Transverse colon (tissue), 4 donors: ENCODE measurements at regions of chr18 and their contacts with region 1.

Region 1: GRCh38 chr18:6807515-6808257 is 78.2 kb downstream of the ARHGAP28 start:
- DNase-seq: no peak
- H3K4me3 ChIP-seq: no peak overlapping the region
- H3K27ac ChIP-seq: no peak overlapping the region
- H3K4me1 ChIP-seq: no peaks in the 10 kb centered on the region
- H3K27me3 ChIP-seq: no peaks in the 10 kb centered on the region
- CTCF ChIP-seq: no peak
- EP300 ChIP-seq: no peak
- POLR2A ChIP-seq: no peak

Region 2: GRCh38 chr18:6714010-6714409 is 93.7 kb before region 1 on chr18:
- in situ Hi-C with region 1: loop called in 1 of 4 experiments (anchors 25 kb)
- intact Hi-C with region 1: no loop called
- DNase-seq: no peak
- H3K4me3 ChIP-seq: no peak overlapping the region
- H3K27ac ChIP-seq: no peak overlapping the region
- H3K4me1 ChIP-seq: no peaks in the 10 kb centered on the region
- H3K27me3 ChIP-seq: no peaks in the 10 kb centered on the region
- CTCF ChIP-seq: no peak
- EP300 ChIP-seq: no peak
- POLR2A ChIP-seq: no peak

Region 3: GRCh38 chr18:6731222-6731596 is 76.5 kb before region 1 on chr18:
- in situ Hi-C with region 1: no loop called
- intact Hi-C with region 1: no loop called
- DNase-seq: no peak
- H3K4me3 ChIP-seq: peak overlapping the region in 1 of 4 donors; percentile 59
- H3K27ac ChIP-seq: peak overlapping the region; percentile 71 to 87 (median 80)
- H3K4me1 ChIP-seq: peaks cover 0 to 4% (median 2%) of the 10 kb centered on the region in 4 donors
- H3K27me3 ChIP-seq: peaks cover 5% of the 10 kb centered on the region
- CTCF ChIP-seq: no peak
- EP300 ChIP-seq: no peak
- POLR2A ChIP-seq: no peak

Region 4: DNA sequence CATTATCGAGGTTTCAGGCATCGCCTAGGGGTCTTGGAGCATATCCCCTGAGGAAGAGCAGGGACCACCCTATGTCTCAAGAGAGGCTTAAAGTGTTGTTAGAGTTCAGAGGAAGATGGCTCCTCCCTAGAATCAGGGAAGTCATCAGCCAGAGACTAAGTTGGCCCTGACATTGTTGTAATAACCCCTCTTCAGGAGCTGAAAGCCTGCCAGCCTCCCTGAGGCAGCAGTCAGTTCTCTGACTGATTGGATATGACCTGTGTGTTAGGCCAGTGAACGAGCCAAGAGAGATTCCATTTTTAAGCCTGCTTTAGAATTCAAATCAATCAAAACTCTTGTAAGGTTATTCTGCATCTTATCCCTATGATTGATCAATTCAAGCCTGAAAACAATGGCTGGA is 43.3 kb before region 1 on chr18:
- in situ Hi-C with region 1: no loop called
- intact Hi-C with region 1: no loop called
- DNase-seq: no peak
- H3K4me3 ChIP-seq: no peak overlapping the region
- H3K27ac ChIP-seq: no peak overlapping the region
- H3K4me1 ChIP-seq: no peaks in the 10 kb centered on the region
- H3K27me3 ChIP-seq: no peaks in the 10 kb centered on the region
- CTCF ChIP-seq: no peak
- EP300 ChIP-seq: no peak
- POLR2A ChIP-seq: no peak

Region 5: GRCh38 chr18:8247700-8248099 is 1440.0 kb after region 1 on chr18:
- in situ Hi-C with region 1: no loop called
- intact Hi-C with region 1: loop called (anchors 5 kb)
- DNase-seq: no peak
- H3K4me3 ChIP-seq: no peak overlapping the region
- H3K27ac ChIP-seq: no peak overlapping the region
- H3K4me1 ChIP-seq: no peaks in the 10 kb centered on the region
- H3K27me3 ChIP-seq: no peaks in the 10 kb centered on the region
- CTCF ChIP-seq: no peak
- EP300 ChIP-seq: no peak
- POLR2A ChIP-seq: no peak